ENCODE measurements at regions of chr17 and their contacts with region 1.

Region 1: DNA sequence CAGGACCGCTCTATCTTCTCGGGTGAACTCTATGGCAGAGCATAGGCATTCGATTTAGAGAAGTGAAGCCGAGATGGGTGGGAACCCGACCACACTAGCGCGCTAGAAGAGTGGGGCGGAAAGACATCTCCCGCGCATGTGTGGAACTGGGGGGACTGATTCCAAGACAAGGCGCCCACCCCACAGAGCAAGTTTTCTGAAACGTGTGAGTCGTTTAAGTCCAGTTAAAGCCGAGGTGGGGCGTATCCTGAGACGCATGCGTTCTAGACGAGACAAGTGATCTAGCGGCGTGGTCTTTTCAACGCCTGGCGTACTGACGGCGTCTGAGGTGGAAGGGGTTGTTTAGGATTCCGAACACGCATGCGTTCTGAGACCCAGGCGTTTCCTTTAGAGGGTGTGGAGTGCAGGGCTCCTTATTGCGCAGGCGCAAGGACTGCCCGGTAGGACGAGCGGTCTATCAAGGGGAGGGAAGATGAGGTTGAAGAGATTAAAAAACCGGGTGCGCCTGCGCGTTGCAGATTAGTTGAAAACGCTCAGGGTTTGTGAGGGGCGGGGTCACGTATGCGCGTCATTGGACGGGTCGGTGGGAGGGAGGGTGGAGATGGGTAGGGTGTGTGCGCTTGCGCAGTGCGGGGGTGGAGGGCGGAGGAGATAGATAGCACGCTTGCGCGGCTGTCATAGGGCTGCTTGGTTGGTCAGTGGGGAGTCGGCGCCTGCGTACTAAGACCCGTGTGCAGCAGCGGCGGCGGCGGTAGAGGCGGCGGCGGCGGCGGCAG is at the start of gene EIF5A:
- DNase-seq: peak; percentile 100
- ATAC-seq: peak; percentile 67
- H3K4me3 ChIP-seq: peak within 1 kb of the TSS; percentile 66 to 92
- H3K4me3 Mint-ChIP-seq: peak within 1 kb of the TSS; percentile 98
- H3K27ac ChIP-seq: peak within 1 kb of the TSS; percentile 91 to 94
- H3K27ac Mint-ChIP-seq: peak within 1 kb of the TSS; percentile 99
- H3K4me1 ChIP-seq: peaks cover 25% of the 10 kb centered on the region
- H3K4me1 Mint-ChIP-seq: peaks cover 40% of the 10 kb centered on the region
- H3K27me3 ChIP-seq: no peaks in the 10 kb centered on the region
- H3K27me3 Mint-ChIP-seq: no peaks in the 10 kb centered on the region
- CTCF ChIP-seq: no peak
- total RNA-seq, gene EIF5A: 581 to 613 TPM

Region 2: GRCh38 chr17:7239091-7240027 is 67.7 kb before region 1 on chr17 and contains the start of gene PHF23:
- CTCF ChIA-PET with region 1: no interaction called
- POLR2A ChIA-PET with region 1: no interaction called
- intact Hi-C with region 1: loop called (anchors 1 kb)
- DNase-seq: peak; percentile 93 to 99 (median 97)
- ATAC-seq: peak; percentile 64
- H3K4me3 ChIP-seq: peak within 1 kb of the TSS; percentile 87 to 90
- H3K4me3 Mint-ChIP-seq: peak within 1 kb of the TSS; percentile 98
- H3K27ac ChIP-seq: peak within 1 kb of the TSS; percentile 64 to 100
- H3K27ac Mint-ChIP-seq: peak within 1 kb of the TSS; percentile 90
- H3K4me1 ChIP-seq: peaks cover 37% of the 10 kb centered on the region
- H3K4me1 Mint-ChIP-seq: peaks cover 58% of the 10 kb centered on the region
- H3K27me3 ChIP-seq: no peaks in the 10 kb centered on the region
- H3K27me3 Mint-ChIP-seq: no peaks in the 10 kb centered on the region
- CTCF ChIP-seq: no peak
- total RNA-seq, gene PHF23: 2.8 to 3.1 TPM

Region 3: GRCh38 chr17:7296189-7296902 is 10.8 kb before region 1 on chr17:
- CTCF ChIA-PET with region 1: interaction called, 18 read pairs
- POLR2A ChIA-PET with region 1: interaction called, 7 read pairs
- intact Hi-C with region 1: no loop called
- DNase-seq: peak in 7 of 9 experiments; percentile 54 to 82 (median 75)
- ATAC-seq: no peak
- H3K4me3 ChIP-seq: no peak overlapping the region
- H3K4me3 Mint-ChIP-seq: peak overlapping the region; percentile 75
- H3K27ac ChIP-seq: no peak overlapping the region
- H3K27ac Mint-ChIP-seq: no peak overlapping the region
- H3K4me1 ChIP-seq: peaks cover 25% of the 10 kb centered on the region
- H3K4me1 Mint-ChIP-seq: peaks cover 19% of the 10 kb centered on the region
- H3K27me3 ChIP-seq: peaks cover 0 to 15% of the 10 kb centered on the region in 2 experiments
- H3K27me3 Mint-ChIP-seq: peaks cover 9% of the 10 kb centered on the region
- CTCF ChIP-seq: peak; percentile 89

Region 4: GRCh38 chr17:7403977-7404736 is 97.1 kb after region 1 on chr17 and contains the start of gene TMEM256:
- CTCF ChIA-PET with region 1: no interaction called
- POLR2A ChIA-PET with region 1: interaction called, 6 read pairs
- intact Hi-C with region 1: loop called (anchors 1 to 2 kb)
- DNase-seq: peak; percentile 90 to 99 (median 94)
- ATAC-seq: peak; percentile 83
- H3K4me3 ChIP-seq: peak within 1 kb of the TSS; percentile 75 to 83
- H3K4me3 Mint-ChIP-seq: peak within 1 kb of the TSS; percentile 95
- H3K27ac ChIP-seq: peak within 1 kb of the TSS; percentile 61 to 81
- H3K27ac Mint-ChIP-seq: peak within 1 kb of the TSS; percentile 96
- H3K4me1 ChIP-seq: peaks cover 24% of the 10 kb centered on the region
- H3K4me1 Mint-ChIP-seq: peaks cover 31% of the 10 kb centered on the region
- H3K27me3 ChIP-seq: no peaks in the 10 kb centered on the region
- H3K27me3 Mint-ChIP-seq: no peaks in the 10 kb centered on the region
- CTCF ChIP-seq: no peak
- total RNA-seq, gene TMEM256: 27.1 to 29.1 TPM

Region 5: DNA sequence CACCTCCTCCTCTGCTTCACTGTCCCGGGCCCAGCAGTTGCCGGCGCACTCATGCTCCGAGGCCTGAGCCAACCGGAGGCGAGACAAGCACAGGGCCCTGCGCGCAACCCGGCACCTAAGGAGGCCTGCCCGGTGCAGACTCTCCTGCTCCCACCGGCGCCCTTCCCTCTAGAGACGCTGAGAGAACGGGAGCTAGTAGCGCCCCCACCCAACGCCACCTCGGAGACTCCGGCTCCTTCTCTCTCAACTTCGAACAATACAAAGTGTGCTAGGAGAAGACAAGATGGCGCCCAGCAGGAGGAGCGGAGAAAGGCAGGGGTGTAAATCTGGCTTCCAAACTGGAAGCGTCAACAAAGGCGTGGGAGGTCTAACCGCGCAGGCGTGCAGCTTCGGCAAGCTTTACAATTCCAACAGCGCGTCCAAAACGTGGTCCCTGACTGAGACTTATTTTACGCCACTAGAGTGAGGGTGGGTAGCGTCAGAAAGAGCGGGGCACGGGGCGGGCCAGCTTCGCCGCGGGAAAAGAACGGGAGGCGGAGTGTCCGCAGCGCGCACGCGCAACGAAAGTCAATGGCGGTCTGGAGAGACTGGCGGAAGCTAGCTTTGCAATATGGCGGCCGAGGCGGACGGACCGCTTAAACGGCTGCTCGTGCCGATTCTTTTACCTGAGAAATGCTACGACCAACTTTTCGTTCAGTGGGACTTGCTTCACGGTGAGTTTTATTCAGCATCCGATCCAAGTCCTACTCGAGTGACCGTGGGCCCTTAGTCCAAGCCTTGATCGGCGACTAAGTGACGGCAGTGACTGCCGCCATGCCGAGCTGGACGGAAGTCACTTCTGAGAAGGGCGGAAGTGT is 276.4 kb after region 1 on chr17 and contains the start of gene MPDU1:
- CTCF ChIA-PET with region 1: no interaction called
- POLR2A ChIA-PET with region 1: no interaction called
- intact Hi-C with region 1: loop called in 1 of 2 experiments (anchors 1 kb)
- DNase-seq: peak; percentile 85 to 98 (median 94)
- ATAC-seq: peak; percentile 83
- H3K4me3 ChIP-seq: peak within 1 kb of the TSS; percentile 90 to 93
- H3K4me3 Mint-ChIP-seq: peak within 1 kb of the TSS; percentile 100
- H3K27ac ChIP-seq: peak within 1 kb of the TSS; percentile 92 to 99
- H3K27ac Mint-ChIP-seq: peak within 1 kb of the TSS; percentile 100
- H3K4me1 ChIP-seq: peaks cover 40% of the 10 kb centered on the region
- H3K4me1 Mint-ChIP-seq: peaks cover 47% of the 10 kb centered on the region
- H3K27me3 ChIP-seq: no peaks in the 10 kb centered on the region
- H3K27me3 Mint-ChIP-seq: no peaks in the 10 kb centered on the region
- CTCF ChIP-seq: no peak
- total RNA-seq, gene MPDU1: 16.6 to 17.2 TPM

Region 6: GRCh38 chr17:7856883-7857723 is 550.0 kb after region 1 on chr17 and contains the start of gene NAA38:
- CTCF ChIA-PET with region 1: no interaction called
- POLR2A ChIA-PET with region 1: no interaction called
- intact Hi-C with region 1: loop called in 1 of 2 experiments (anchors 2 kb)
- DNase-seq: peak; percentile 87 to 99 (median 95)
- ATAC-seq: peak; percentile 81
- H3K4me3 ChIP-seq: peak within 1 kb of the TSS; percentile 88 to 98
- H3K4me3 Mint-ChIP-seq: no peak within 1 kb of the TSS
- H3K27ac ChIP-seq: peak within 1 kb of the TSS; percentile 93 to 94
- H3K27ac Mint-ChIP-seq: no peak within 1 kb of the TSS
- H3K4me1 ChIP-seq: peaks cover 28% of the 10 kb centered on the region
- H3K4me1 Mint-ChIP-seq: peaks cover 5% of the 10 kb centered on the region
- H3K27me3 ChIP-seq: no peaks in the 10 kb centered on the region
- H3K27me3 Mint-ChIP-seq: no peaks in the 10 kb centered on the region
- CTCF ChIP-seq: no peak
- total RNA-seq, gene NAA38: 14.3 to 16.5 TPM

Region 7: DNA sequence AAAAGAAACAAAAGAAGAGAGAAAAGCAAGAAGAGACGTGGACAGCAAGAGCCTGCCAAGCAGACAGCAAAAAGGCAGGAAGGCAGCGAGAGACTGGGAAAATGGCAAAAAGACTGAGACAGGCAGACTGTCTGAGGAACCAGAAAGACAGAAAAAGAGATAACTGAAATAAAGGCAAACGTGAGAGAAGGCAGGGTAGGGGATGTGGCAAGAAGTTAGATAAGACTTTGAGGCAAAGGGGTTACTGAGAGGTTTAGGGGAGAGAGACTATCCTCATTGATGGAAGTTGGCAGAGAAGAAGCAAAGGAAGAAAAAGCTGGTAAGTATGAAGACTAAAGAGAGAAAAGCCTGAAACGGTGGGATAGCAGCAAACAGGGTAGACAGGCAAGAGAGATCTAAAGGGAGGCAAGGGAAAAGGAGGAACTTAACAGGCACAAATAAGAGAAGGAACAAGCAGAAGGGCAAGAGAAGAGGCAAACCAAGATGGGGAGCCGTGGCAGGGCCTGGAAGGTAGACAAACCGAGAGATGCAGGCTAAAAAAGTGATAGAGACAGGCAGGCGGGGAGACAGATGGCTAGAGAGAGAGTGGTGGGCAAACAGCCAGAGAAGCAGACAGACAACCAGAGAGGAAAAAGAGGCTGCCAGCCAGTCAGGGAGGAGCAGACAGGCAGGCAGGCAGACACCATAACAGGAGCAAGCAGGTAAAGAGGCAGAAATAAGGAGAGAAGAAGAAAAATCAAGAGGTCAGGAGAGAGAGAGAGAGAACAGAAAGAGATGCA is 574.4 kb after region 1 on chr17:
- CTCF ChIA-PET with region 1: no interaction called
- POLR2A ChIA-PET with region 1: no interaction called
- intact Hi-C with region 1: no loop called
- DNase-seq: no peak
- ATAC-seq: no peak
- H3K4me3 ChIP-seq: no peak overlapping the region
- H3K4me3 Mint-ChIP-seq: no peak overlapping the region
- H3K27ac ChIP-seq: no peak overlapping the region
- H3K27ac Mint-ChIP-seq: no peak overlapping the region
- H3K4me1 ChIP-seq: peaks cover 45% of the 10 kb centered on the region
- H3K4me1 Mint-ChIP-seq: peaks cover 8% of the 10 kb centered on the region
- H3K27me3 ChIP-seq: no peaks in the 10 kb centered on the region
- H3K27me3 Mint-ChIP-seq: no peaks in the 10 kb centered on the region
- CTCF ChIP-seq: no peak

Measured in CD8-positive, alpha-beta T cell (primary cell).